ENCODE measurements at regions of chr20 and their contacts with region 1.

Region 1: DNA sequence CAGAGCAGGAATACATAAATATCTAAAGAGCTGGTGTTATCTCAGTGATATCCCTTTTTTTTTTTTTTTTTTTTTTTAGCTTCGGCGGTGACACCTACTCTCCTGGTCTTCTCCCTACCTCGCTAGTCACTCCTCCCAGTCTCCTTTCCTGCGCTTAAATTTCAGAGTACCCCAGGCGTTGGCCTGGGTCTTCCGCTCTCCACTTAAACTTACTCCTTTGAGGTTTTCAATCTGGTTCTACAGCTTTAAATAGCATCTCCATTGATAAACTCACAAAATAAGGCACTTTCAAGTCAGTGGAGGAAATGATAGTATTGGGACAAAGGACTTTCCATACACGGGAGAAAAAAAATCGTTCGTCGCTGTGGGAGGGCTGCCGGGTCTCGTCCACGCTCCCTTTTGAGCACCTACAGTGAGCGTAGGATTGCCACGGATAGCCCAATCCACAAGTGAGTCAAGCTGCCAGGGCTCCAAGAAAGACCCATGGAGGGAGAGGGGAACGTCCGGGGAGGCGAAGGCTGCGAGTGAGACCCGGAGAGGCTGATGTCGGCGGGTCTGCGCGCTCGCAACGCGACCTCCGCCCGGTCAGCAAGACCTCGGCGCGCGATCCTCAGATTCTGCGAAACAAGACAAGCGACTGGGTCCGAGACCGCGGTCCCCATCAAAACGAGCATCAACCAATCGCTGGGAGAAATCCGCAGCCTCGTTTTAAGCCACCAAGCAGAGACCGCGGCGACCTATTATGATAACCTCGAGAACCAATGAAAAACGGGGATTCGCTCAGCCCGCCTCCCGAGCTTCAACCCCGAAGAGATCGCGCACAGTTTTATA is 672 bp upstream of the SRSF6 start:
- H3K4me3 ChIP-seq: peak overlapping the region; percentile 91
- H3K27ac ChIP-seq: peak overlapping the region; percentile 99
- H3K4me1 ChIP-seq: no peaks in the 10 kb centered on the region
- CTCF ChIP-seq: no peak

Region 2: DNA sequence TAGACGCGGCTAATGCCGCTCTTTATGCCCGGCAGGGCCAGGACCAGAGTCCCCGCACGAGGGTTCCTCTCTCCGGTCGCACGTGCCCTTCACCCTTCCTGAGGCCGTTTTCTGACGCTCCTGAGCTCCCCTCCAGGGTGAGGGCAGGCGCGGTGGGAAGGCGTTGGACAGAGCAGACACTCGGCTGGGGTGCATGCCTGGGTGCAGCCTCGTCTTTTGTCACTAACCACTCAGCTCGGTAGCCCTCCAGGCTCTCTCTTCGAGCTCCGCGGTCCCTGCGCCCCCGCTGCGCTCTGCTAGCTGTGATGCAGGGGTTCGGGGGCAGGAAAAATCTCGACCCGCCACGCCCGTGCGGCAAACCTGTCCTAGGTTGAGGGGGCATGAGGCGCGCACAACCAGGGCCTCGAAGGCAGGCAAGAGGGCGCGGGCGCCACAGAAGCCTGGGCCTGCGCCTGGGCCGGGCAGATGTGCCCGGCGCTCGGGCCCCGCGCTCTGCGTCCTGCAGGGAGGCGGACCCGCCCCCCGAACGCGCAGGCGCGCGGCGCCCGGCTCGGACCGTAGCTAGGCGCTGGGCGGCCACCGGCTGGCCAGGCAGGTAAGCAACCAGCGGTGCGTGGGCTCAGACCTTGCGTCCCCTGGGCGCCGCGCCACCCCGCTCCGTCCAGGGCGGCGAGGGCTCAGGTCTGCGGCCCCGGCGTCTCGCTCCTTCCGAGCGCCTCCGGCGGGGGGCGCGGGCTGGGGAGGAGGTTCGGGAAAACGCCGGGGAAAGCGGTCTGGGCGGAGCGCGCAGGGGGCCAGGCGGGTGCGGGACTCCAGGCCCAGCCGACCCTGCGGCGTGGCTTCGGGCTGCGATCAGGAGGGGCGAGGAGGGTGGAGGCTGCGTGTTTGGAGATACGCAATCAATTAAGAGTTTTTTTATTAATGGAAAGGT is 50.4 kb after region 1 on chr20 and contains the start of gene L3MBTL1:
- CTCF ChIA-PET with region 1: no interaction called
- POLR2A ChIA-PET with region 1: interaction called, 13 read pairs
- H3K4me3 ChIP-seq: peak within 1 kb of the TSS; percentile 61
- H3K27ac ChIP-seq: no peak within 1 kb of the TSS; the same call in 1 of the 2 replicates
- H3K4me1 ChIP-seq: no peaks in the 10 kb centered on the region
- CTCF ChIP-seq: peak; percentile 39; the same call in 1 of the 2 replicates

Region 3: GRCh38 chr20:43590392-43591323 is 133.6 kb after region 1 on chr20 and contains the start of gene IFT52:
- CTCF ChIA-PET with region 1: no interaction called
- POLR2A ChIA-PET with region 1: interaction called, 16 read pairs
- H3K4me3 ChIP-seq: peak within 1 kb of the TSS; percentile 99
- H3K27ac ChIP-seq: peak within 1 kb of the TSS; percentile 78
- H3K4me1 ChIP-seq: no peaks in the 10 kb centered on the region
- CTCF ChIP-seq: no peak